ENCODE measurements at regions of chr9 and their contacts with region 1.

Region 1: GRCh38 chr9:122827761-122828093 is 661 bp downstream of the PDCL start:
- DNase-seq: no peak
- ATAC-seq: peak; percentile 5
- H3K4me3 ChIP-seq: peak overlapping the region; percentile 99
- H3K4me3 Mint-ChIP-seq: peak overlapping the region; percentile 100
- H3K27ac ChIP-seq: peak overlapping the region; percentile 84 to 98
- H3K27ac Mint-ChIP-seq: peak overlapping the region; percentile 95
- H3K4me1 ChIP-seq: peaks cover 30% of the 10 kb centered on the region
- H3K4me1 Mint-ChIP-seq: peaks cover 53% of the 10 kb centered on the region
- H3K27me3 ChIP-seq: no peaks in the 10 kb centered on the region
- H3K27me3 Mint-ChIP-seq: no peaks in the 10 kb centered on the region
- CTCF ChIP-seq: no peak

Region 2: GRCh38 chr9:122264360-122265148 is 563.2 kb before region 1 on chr9 and contains the starts of genes MRRF and RBM18:
- CTCF ChIA-PET with region 1: no interaction called
- POLR2A ChIA-PET with region 1: no interaction called
- intact Hi-C with region 1: loop called (anchors 5 to 10 kb)
- DNase-seq: peak; percentile 73 to 96 (median 82)
- ATAC-seq: peak; percentile 82
- H3K4me3 ChIP-seq: peak within 1 kb of the TSS; percentile 86
- H3K4me3 Mint-ChIP-seq: peak within 1 kb of the TSS; percentile 90
- H3K27ac ChIP-seq: peak within 1 kb of the TSS; percentile 89 to 97
- H3K27ac Mint-ChIP-seq: peak within 1 kb of the TSS; percentile 94
- H3K4me1 ChIP-seq: peaks cover 29% of the 10 kb centered on the region
- H3K4me1 Mint-ChIP-seq: peaks cover 71% of the 10 kb centered on the region
- H3K27me3 ChIP-seq: no peaks in the 10 kb centered on the region
- H3K27me3 Mint-ChIP-seq: no peaks in the 10 kb centered on the region
- CTCF ChIP-seq: no peak
- total RNA-seq, gene MRRF: 18.4 to 18.7 TPM
- total RNA-seq, gene RBM18: 25.9 to 27.0 TPM

Region 3: DNA sequence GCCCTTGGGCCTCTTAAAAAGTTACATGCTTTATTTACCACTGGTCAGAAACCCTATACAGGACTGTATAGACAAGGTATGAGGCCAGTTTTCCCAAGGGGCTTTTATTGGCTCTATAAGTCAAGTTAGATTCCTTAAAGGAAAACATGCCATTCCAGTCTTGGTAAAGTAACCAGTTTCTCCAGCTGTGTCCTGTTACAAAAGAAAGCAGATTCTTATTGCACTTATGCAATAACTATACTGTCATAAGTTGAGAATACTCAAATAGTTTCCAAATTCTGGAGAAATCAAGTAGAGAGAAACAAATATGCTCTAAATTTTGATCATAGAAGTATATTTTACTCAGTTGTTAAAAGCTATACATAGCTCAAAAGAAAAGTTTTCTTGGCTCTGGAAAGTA is 409.7 kb before region 1 on chr9:
- CTCF ChIA-PET with region 1: no interaction called
- POLR2A ChIA-PET with region 1: no interaction called
- intact Hi-C with region 1: no loop called
- DNase-seq: no peak
- ATAC-seq: no peak
- H3K4me3 ChIP-seq: no peak overlapping the region
- H3K4me3 Mint-ChIP-seq: no peak overlapping the region
- H3K27ac ChIP-seq: no peak overlapping the region
- H3K27ac Mint-ChIP-seq: no peak overlapping the region
- H3K4me1 ChIP-seq: no peaks in the 10 kb centered on the region
- H3K4me1 Mint-ChIP-seq: no peaks in the 10 kb centered on the region
- H3K27me3 ChIP-seq: peaks cover 4 to 5% of the 10 kb centered on the region in 2 experiments
- H3K27me3 Mint-ChIP-seq: peaks cover 54% of the 10 kb centered on the region
- CTCF ChIP-seq: no peak

Region 4: GRCh38 chr9:122609806-122610205 is 217.9 kb before region 1 on chr9:
- CTCF ChIA-PET with region 1: no interaction called
- POLR2A ChIA-PET with region 1: no interaction called
- intact Hi-C with region 1: no loop called
- DNase-seq: no peak
- ATAC-seq: no peak
- H3K4me3 ChIP-seq: no peak overlapping the region
- H3K4me3 Mint-ChIP-seq: no peak overlapping the region
- H3K27ac ChIP-seq: no peak overlapping the region
- H3K27ac Mint-ChIP-seq: no peak overlapping the region
- H3K4me1 ChIP-seq: no peaks in the 10 kb centered on the region
- H3K4me1 Mint-ChIP-seq: no peaks in the 10 kb centered on the region
- H3K27me3 ChIP-seq: peaks cover 3 to 6% of the 10 kb centered on the region in 2 experiments
- H3K27me3 Mint-ChIP-seq: peaks cover 23% of the 10 kb centered on the region
- CTCF ChIP-seq: no peak

Region 5: DNA sequence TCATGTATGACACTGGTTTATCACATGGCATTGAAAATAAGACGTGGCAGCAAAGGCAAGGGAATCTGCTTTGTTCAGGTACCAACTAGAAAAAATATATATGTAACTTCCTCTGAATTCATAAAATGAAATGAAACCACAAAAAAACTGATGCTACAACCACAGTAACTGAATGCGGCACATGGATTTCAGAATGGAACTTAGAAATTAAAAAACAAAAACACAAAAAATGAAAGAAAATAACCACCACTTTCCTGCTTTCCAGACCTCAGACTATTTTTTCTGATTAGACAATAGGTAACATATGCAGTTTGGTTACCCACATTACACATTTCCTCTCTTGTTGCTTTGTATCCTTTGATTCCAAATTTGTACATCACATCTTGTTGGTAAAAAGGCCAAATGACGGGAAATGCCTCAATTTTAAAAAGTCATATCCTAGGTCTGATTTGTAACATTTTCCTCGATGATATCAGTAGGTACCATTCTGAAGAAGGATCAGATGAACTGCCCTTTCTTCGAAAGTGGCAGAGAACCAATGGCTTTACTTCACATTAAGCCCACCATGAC is 18.7 kb after region 1 on chr9:
- CTCF ChIA-PET with region 1: no interaction called
- POLR2A ChIA-PET with region 1: interaction called, 3 read pairs
- intact Hi-C with region 1: loop called in 1 of 2 experiments (anchors 1 kb)
- DNase-seq: peak in 4 of 14 experiments; percentile 31 to 52 (median 34)
- ATAC-seq: peak; percentile 80
- H3K4me3 ChIP-seq: no peak overlapping the region
- H3K4me3 Mint-ChIP-seq: peak overlapping the region; percentile 36
- H3K27ac ChIP-seq: no peak overlapping the region
- H3K27ac Mint-ChIP-seq: peak overlapping the region; percentile 87
- H3K4me1 ChIP-seq: no peaks in the 10 kb centered on the region
- H3K4me1 Mint-ChIP-seq: peaks cover 51% of the 10 kb centered on the region
- H3K27me3 ChIP-seq: no peaks in the 10 kb centered on the region
- H3K27me3 Mint-ChIP-seq: no peaks in the 10 kb centered on the region
- CTCF ChIP-seq: no peak

Region 6: DNA sequence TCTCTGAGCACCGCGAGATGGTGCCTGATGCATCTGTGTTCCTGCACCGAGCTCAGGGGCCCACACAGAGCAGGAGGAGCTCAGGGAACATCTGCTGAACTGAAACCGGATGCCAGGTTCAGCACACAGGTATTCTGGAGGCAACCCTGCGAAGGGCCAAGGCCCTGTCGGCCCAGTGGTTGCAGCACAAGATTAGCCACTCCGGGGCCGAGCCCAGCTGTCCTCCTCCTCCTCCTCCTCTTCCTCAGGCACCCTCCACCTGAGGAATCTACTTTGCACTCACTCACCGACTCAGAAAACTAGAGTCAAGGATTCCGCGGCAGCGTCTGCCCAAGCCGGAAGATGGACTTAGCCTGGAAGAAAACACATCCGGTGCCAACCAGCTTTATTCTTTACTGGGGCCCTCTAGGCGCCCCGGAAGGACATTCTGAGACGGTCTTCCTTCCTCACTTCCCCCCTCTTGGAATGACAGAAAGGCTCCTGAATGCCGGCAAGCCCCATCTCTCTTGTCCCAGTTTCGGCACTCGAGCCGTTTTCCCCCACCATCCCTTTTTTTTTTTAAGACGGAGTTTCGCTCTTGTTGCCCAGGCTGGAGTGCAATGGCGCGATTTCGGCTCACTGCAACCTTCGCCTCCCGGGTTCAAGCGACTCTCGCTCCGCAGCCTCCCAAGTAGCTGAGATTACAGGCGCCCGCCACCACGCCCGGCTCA is 85.4 kb after region 1 on chr9 and contains the start of gene ZBTB6:
- CTCF ChIA-PET with region 1: no interaction called
- POLR2A ChIA-PET with region 1: interaction called, 14 read pairs
- intact Hi-C with region 1: loop called in 1 of 2 experiments (anchors 5 kb)
- DNase-seq: peak; percentile 52 to 89 (median 64)
- ATAC-seq: peak; percentile 98
- H3K4me3 ChIP-seq: peak within 1 kb of the TSS; percentile 78
- H3K4me3 Mint-ChIP-seq: peak within 1 kb of the TSS; percentile 96
- H3K27ac ChIP-seq: peak within 1 kb of the TSS; percentile 86 to 88
- H3K27ac Mint-ChIP-seq: peak within 1 kb of the TSS; percentile 88
- H3K4me1 ChIP-seq: peaks cover 11% of the 10 kb centered on the region
- H3K4me1 Mint-ChIP-seq: peaks cover 29% of the 10 kb centered on the region
- H3K27me3 ChIP-seq: no peaks in the 10 kb centered on the region
- H3K27me3 Mint-ChIP-seq: no peaks in the 10 kb centered on the region
- CTCF ChIP-seq: no peak
- total RNA-seq, gene ZBTB6: 3.6 to 3.9 TPM

Region 7: DNA sequence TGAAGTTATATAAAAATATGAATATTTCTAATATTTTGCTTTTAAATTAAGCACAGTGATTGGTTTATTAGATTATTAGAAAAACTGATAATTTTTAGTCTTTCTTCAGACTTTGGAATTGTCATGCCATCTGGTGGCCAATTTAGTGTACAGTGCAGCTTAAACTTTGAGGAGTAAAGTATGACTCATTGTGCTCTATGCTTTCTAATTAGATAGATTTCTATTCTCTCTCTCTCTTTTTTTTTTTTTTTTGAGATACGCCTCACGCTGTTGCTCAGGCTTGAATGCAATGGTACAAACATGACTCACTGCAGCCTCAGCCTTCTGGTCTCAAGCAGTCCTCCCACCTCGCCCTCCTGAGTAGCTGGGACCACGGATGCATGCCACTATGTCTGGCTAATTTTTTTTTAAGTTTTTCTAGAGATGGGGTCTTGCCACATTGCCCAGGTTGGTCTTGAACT is 163.7 kb after region 1 on chr9:
- CTCF ChIA-PET with region 1: interaction called, 3 read pairs
- POLR2A ChIA-PET with region 1: no interaction called
- intact Hi-C with region 1: loop called in 1 of 2 experiments (anchors 5 kb)
- DNase-seq: peak in 10 of 14 experiments; percentile 0 to 66 (median 12)
- ATAC-seq: peak; percentile 94
- H3K4me3 ChIP-seq: no peak overlapping the region
- H3K4me3 Mint-ChIP-seq: no peak overlapping the region
- H3K27ac ChIP-seq: no peak overlapping the region
- H3K27ac Mint-ChIP-seq: peak overlapping the region; percentile 34
- H3K4me1 ChIP-seq: no peaks in the 10 kb centered on the region
- H3K4me1 Mint-ChIP-seq: no peaks in the 10 kb centered on the region
- H3K27me3 ChIP-seq: no peaks in the 10 kb centered on the region
- H3K27me3 Mint-ChIP-seq: no peaks in the 10 kb centered on the region
- CTCF ChIP-seq: peak; percentile 82

Measured in CD4-positive, alpha-beta T cell (primary cell).